GM12878 (cell line): ENCODE measurements at regions of chr1 and their contacts with region 1.

Region 1: DNA sequence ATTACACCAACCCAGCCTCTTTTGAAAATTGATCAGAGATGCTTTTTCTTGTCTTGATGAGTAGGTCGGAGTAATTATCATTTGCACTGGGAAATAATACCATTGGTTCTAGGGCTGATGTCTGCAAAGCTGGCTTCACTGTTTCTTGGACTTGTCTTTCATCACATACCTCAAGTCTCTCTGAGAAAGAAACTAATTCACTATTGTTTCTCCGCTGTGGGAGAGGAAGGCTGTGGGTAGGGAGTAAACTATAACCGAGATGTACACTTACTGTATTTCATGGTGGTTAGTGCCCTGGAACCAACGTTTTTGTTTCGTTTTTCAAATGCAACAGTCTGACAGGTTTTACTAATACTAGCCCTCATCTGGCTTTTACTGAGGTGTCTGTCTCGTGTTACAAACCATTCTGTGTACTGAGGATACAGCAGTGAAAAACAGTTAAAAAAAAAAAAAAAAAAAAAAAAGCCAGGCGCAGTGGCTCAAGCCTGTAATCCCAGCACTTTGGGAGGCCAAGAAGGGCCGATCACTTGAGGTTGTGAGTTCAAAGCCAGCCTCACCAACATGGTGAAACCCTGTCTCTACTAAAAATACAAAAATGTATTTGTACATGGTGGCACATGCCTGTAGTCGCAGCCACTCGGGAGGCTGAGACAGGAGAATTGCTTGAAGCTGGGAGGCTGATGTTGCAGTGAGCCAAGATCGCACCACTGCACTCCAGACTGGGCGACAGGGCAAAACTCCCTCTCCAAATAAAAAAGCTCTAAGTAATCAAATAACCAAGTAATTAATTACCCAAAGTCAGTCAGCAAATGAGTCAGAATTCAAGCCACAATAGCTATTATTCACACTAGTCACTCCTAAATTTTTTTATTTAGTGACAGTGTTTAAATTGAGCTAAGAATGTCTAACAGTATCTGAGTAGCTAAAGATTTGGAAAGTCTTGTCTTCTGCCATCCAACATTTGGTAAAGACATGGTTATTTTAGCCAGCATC is 23.3 kb downstream of the TOMM20 start:
- DNase-seq: peak; percentile 86
- ATAC-seq: peak; percentile 87
- H3K4me3 ChIP-seq: peak overlapping the region; percentile 60; the same call in 1 of the 2 replicates
- H3K27ac ChIP-seq: peak overlapping the region; percentile 43
- H3K4me1 ChIP-seq: peaks cover 17% of the 10 kb centered on the region
- H3K27me3 ChIP-seq: no peaks in the 10 kb centered on the region
- CTCF ChIP-seq: no peak
- EP300 ChIP-seq: peak in 1 of 2 experiments; percentile 28; a peak in 1 of 4 replicates
- POLR2A ChIP-seq: no peak
- RAD21 ChIP-seq: no peak

Region 2: GRCh38 chr1:235093696-235094592 is 11.4 kb before region 1 on chr1:
- CTCF ChIA-PET with region 1: interaction called, 47 read pairs
- POLR2A ChIA-PET with region 1: no interaction called
- RAD21 ChIA-PET with region 1: interaction called, 6 read pairs
- SMC1A ChIA-PET with region 1: interaction called, 23 read pairs
- in situ Hi-C with region 1: no loop called
- intact Hi-C with region 1: no loop called
- DNase-seq: no peak
- ATAC-seq: peak; percentile 94
- H3K4me3 ChIP-seq: no peak overlapping the region
- H3K27ac ChIP-seq: no peak overlapping the region
- H3K4me1 ChIP-seq: no peaks in the 10 kb centered on the region; the same call in 1 of the 2 replicates
- H3K27me3 ChIP-seq: no peaks in the 10 kb centered on the region
- CTCF ChIP-seq: peak; percentile 91 to 97 (median 94)
- EP300 ChIP-seq: no peak
- POLR2A ChIP-seq: no peak
- RAD21 ChIP-seq: peak; percentile 81

Region 3: GRCh38 chr1:235122348-235122747 is 17.0 kb after region 1 on chr1:
- CTCF ChIA-PET with region 1: interaction called, 64 read pairs
- POLR2A ChIA-PET with region 1: interaction called, 11 read pairs
- RAD21 ChIA-PET with region 1: interaction called, 30 read pairs
- SMC1A ChIA-PET with region 1: interaction called, 18 read pairs
- in situ Hi-C with region 1: no loop called
- intact Hi-C with region 1: no loop called
- DNase-seq: no peak
- ATAC-seq: peak; percentile 41
- H3K4me3 ChIP-seq: peak overlapping the region; percentile 3; the same call in 1 of the 2 replicates
- H3K27ac ChIP-seq: no peak overlapping the region
- H3K4me1 ChIP-seq: no peaks in the 10 kb centered on the region
- H3K27me3 ChIP-seq: no peaks in the 10 kb centered on the region
- CTCF ChIP-seq: no peak
- EP300 ChIP-seq: no peak
- POLR2A ChIP-seq: no peak
- RAD21 ChIP-seq: no peak

Region 4: GRCh38 chr1:235128456-235129328 is 23.3 kb after region 1 on chr1 and contains the start of gene TOMM20:
- CTCF ChIA-PET with region 1: interaction called, 64 read pairs
- POLR2A ChIA-PET with region 1: interaction called, 7 read pairs
- RAD21 ChIA-PET with region 1: interaction called, 10 read pairs
- SMC1A ChIA-PET with region 1: interaction called, 18 read pairs
- in situ Hi-C with region 1: no loop called
- intact Hi-C with region 1: loop called (anchors 2 kb)
- DNase-seq: peak; percentile 95
- ATAC-seq: peak; percentile 92
- H3K4me3 ChIP-seq: peak within 1 kb of the TSS; percentile 90
- H3K27ac ChIP-seq: peak within 1 kb of the TSS; percentile 90
- H3K4me1 ChIP-seq: 0 out of 2 replicates have a peak, but pooled peaks cover 3% of the 10 kb centered on the region
- H3K27me3 ChIP-seq: no peaks in the 10 kb centered on the region
- CTCF ChIP-seq: no peak
- EP300 ChIP-seq: no peak
- POLR2A ChIP-seq: peak; percentile 99
- RAD21 ChIP-seq: no peak
- polyA plus RNA-seq, gene TOMM20: 39.8 to 60.1 TPM

Region 5: GRCh38 chr1:235160957-235161684 is 55.8 kb after region 1 on chr1 and contains the start of gene RBM34:
- CTCF ChIA-PET with region 1: interaction called, 14 read pairs
- POLR2A ChIA-PET with region 1: interaction called, 12 read pairs
- RAD21 ChIA-PET with region 1: interaction called, 5 read pairs
- SMC1A ChIA-PET with region 1: interaction called, 15 read pairs
- in situ Hi-C with region 1: no loop called
- intact Hi-C with region 1: no loop called
- DNase-seq: peak; percentile 65
- ATAC-seq: peak; percentile 96
- H3K4me3 ChIP-seq: peak within 1 kb of the TSS; percentile 82
- H3K27ac ChIP-seq: peak within 1 kb of the TSS; percentile 98
- H3K4me1 ChIP-seq: peaks cover 3% of the 10 kb centered on the region; the same call in 1 of the 2 replicates
- H3K27me3 ChIP-seq: no peaks in the 10 kb centered on the region
- CTCF ChIP-seq: peak in 2 of 3 experiments; percentile 19 to 23; a peak in 1 of 6 replicates
- EP300 ChIP-seq: no peak
- POLR2A ChIP-seq: peak; percentile 98
- RAD21 ChIP-seq: no peak
- polyA plus RNA-seq, gene RBM34: 98.2 to 124 TPM

Region 6: GRCh38 chr1:235495551-235495950 is 390.2 kb after region 1 on chr1:
- CTCF ChIA-PET with region 1: no interaction called
- POLR2A ChIA-PET with region 1: no interaction called
- RAD21 ChIA-PET with region 1: no interaction called
- SMC1A ChIA-PET with region 1: no interaction called
- in situ Hi-C with region 1: no loop called
- intact Hi-C with region 1: loop called (anchors 5 kb)
- DNase-seq: no peak
- ATAC-seq: no peak
- H3K4me3 ChIP-seq: no peak overlapping the region
- H3K27ac ChIP-seq: no peak overlapping the region
- H3K4me1 ChIP-seq: peaks cover 8% of the 10 kb centered on the region
- H3K27me3 ChIP-seq: no peaks in the 10 kb centered on the region
- CTCF ChIP-seq: no peak
- EP300 ChIP-seq: no peak
- POLR2A ChIP-seq: no peak
- RAD21 ChIP-seq: no peak